Posterior vena cava (tissue), 2 donors: ENCODE measurements at regions of chr12 and their contacts with region 1.

Region 1: GRCh38 chr12:80192087-80192486 is 92.8 kb downstream of the OTOGL start:
- DNase-seq: no peak

Region 2: DNA sequence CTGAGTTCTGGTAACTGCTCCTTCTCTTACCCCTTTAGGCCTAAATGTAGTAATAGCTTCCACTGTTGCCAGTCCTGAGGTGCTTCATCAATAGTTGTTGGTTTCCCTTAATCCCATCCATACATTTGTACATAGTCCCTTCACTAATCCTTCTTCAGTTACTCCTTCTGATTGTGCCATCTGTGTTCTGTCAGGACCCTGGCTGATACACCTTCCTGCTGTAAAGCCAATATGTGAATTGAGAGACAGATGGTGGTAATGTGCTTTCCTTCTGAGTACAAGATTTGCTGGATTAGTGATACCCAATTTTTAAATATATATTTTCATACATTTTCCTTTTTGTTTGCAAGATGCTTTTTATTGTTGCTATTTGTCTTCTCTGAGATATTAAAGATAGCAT is 26.3 kb before region 1 on chr12:
- intact Hi-C with region 1: no loop called
- DNase-seq: no peak

Region 3: DNA sequence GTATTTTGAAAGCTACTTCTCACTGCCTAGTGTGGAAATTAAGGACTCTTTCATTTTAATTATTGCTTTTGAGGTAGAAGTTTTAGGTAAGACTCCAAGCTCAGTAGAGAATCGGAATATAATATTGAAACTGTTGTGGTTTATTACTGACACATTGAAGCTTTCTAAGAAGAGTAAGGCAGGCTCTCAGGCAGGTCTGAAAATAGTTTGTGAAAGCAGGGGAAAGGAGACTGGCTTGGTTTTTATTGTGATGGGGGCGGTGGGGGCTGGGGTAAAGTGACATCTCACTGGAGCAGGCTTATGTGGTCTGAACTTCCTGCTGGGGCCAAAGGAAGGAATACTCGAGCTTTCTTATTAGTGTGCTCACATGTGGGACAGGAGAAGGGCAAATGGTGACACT is 13.2 kb before region 1 on chr12:
- intact Hi-C with region 1: no loop called
- DNase-seq: no peak

Region 4: GRCh38 chr12:80269803-80270552 is 77.9 kb after region 1 on chr12:
- intact Hi-C with region 1: loop called in 1 of 2 experiments (anchors 5 kb)
- DNase-seq: no peak

Region 5: GRCh38 chr12:80373666-80374065 is 181.6 kb after region 1 on chr12:
- intact Hi-C with region 1: no loop called
- DNase-seq: no peak